Dendritic cell treated with granulocyte-macrophage colony-stimulating factor and Interleukin-4, amounts not matched to agents 40 ng/mL and 50 ng/mL, for 4 days (primary cell): ENCODE measurements at regions of chr17 and their contacts with region 1.

Region 1: GRCh38 chr17:72539981-72540897 is 419.4 kb downstream of the SOX9 start:
- H3K4me3 Mint-ChIP-seq: peak overlapping the region; percentile 68
- H3K27ac Mint-ChIP-seq: peak overlapping the region; percentile 12
- H3K4me1 Mint-ChIP-seq: peaks cover 6% of the 10 kb centered on the region
- H3K27me3 Mint-ChIP-seq: peaks cover 39% of the 10 kb centered on the region

Region 2: DNA sequence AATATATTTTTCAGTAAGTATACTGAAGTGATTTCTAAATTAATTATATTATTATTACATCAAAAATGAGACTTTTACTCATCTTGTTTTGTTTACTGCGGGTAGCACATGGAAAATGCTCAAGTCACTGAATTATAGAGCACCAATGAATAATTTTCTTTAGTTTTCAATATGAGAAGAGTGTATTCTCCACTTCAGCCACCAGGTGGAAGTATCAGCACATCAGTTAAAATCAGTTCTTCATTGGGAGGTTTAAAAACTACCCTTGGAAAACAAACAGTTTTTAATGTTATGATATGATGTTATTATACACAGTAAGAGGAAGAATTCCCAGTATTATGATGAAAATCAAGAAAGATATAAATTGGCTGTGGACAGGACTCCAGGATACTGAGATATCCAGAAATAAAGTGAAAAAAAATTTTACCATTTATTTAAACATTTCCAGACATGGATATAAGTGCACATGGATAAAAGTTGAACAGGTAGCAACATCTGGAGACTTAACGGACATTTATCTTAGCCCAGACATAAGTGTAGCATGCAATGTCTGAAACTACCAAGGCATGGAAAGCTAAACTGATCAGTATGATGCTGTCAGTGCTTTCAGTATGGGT is 1903.6 kb before region 1 on chr17:
- intact Hi-C with region 1: loop called (anchors 1 kb)
- H3K4me3 Mint-ChIP-seq: no peak overlapping the region
- H3K27ac Mint-ChIP-seq: no peak overlapping the region
- H3K4me1 Mint-ChIP-seq: no peaks in the 10 kb centered on the region
- H3K27me3 Mint-ChIP-seq: peaks cover 15% of the 10 kb centered on the region

Region 3: DNA sequence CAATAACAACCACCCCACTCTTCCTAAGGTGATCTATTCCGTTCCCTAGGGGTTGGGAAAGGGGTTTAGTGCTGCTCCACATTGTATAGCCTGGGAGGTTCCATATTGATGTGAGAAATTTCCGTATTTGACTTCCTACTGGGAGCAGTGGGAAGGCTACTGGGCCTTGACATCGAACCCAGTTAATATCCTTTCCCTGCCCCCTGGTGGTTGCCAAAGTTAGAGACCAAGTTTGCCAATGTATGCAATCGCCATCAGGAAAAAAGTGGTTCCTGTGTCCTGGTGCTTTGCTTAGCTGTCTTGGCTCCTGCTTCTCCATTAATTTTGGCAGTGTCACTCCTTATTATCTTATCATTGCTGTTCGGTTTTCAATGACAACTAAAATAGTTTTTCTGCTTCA is 1456.0 kb before region 1 on chr17:
- intact Hi-C with region 1: loop called (anchors 10 kb)
- H3K4me3 Mint-ChIP-seq: no peak overlapping the region
- H3K27ac Mint-ChIP-seq: no peak overlapping the region
- H3K4me1 Mint-ChIP-seq: no peaks in the 10 kb centered on the region
- H3K27me3 Mint-ChIP-seq: no peaks in the 10 kb centered on the region

Region 4: DNA sequence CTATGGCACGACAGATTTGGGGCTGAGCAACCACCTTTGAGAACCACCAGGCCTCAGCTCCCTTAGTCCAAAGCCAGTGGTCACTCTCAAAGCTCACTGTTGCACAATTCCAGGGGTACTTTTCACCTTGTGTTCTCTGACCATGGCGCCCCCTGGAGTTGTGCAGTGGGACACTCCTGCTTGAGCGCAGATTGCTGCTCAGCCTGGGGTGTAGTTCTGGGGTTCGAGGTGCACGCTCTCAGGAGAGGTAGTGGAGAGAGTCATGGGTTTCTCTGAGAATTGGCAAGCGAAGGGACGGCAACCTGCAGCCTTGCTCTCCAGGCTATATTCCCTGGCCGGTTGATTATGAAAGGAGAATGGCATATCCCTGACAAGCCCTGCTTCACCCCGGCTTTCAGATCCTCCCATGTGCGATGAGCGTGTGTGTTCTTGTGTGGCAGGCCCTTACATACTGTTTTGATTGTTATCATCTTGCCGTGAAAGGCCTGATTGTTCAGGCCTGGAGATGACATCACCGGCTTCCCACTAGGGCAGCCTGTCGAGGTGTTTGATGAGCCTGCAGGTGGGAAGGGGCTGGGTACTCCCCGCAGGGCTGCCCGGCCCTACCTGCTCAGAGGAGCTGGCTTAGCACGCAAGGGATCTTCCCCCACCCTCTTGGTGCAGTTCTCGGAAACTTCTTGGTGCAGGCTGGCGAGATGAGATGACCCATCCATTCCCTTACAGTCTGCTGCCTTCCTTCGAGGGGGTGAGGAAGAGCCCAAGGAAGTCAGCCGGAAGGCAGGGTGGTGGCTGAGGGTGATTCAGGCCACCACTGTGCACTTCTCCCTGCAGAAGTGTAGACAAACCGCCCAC is 121.1 kb after region 1 on chr17:
- intact Hi-C with region 1: no loop called
- H3K4me3 Mint-ChIP-seq: no peak overlapping the region
- H3K27ac Mint-ChIP-seq: no peak overlapping the region
- H3K4me1 Mint-ChIP-seq: no peaks in the 10 kb centered on the region
- H3K27me3 Mint-ChIP-seq: no peaks in the 10 kb centered on the region